ENCODE measurements at regions of chrX and their contacts with region 1.

Region 1: DNA sequence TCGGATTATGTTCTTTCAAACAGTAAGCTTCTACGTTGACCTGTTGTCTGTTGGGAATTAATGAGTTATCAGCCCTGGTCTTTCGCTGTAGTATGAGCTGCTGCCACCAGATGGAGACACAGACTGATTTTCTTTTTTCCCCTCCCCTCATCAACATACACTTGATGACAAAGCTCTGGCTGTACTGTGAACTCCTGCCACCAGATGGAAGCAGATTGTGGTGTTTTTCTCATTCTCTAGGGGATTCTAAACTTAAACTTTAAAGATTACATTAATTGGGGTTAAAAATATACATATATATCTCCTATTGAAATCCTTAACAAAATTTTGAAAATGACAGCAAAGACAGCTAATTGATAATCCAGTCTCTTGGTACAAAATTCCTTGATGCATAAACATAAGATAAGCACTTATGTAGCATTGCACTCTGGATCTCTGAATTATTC is 44.8 kb downstream of the SMS start:
- DNase-seq: peak; percentile 29 to 80 (median 56)
- ATAC-seq: peak; percentile 98
- H3K4me3 ChIP-seq: no peak overlapping the region
- H3K4me3 Mint-ChIP-seq: no peak overlapping the region
- H3K27ac ChIP-seq: no peak overlapping the region
- H3K27ac Mint-ChIP-seq: no peak overlapping the region
- H3K4me1 ChIP-seq: no peaks in the 10 kb centered on the region
- H3K4me1 Mint-ChIP-seq: peaks cover 6% of the 10 kb centered on the region
- H3K27me3 ChIP-seq: no peaks in the 10 kb centered on the region
- H3K27me3 Mint-ChIP-seq: no peaks in the 10 kb centered on the region
- CTCF ChIP-seq: peak; percentile 71

Region 2: DNA sequence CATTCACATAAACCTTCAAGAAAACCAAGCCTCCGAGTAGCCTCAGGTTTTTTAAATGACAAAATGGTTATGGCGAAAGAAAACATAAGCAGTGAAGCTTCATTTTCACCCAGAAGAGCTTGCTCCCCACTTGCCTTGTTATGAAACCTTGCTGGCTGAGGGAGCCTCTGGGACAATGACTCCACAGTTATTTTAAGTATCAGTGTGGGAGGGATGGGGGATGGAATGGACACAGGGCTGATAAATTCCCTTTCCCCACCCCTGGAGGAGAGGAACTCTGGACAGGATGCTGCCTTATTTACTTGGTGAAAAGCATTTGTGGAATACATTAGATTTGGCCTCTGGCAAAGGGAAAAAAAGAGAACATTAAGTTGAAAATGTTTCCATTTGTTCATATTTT is 831.9 kb before region 1 on chrX:
- CTCF ChIA-PET with region 1: no interaction called
- POLR2A ChIA-PET with region 1: no interaction called
- intact Hi-C with region 1: no loop called
- DNase-seq: no peak
- ATAC-seq: no peak
- H3K4me3 ChIP-seq: no peak overlapping the region
- H3K4me3 Mint-ChIP-seq: no peak overlapping the region
- H3K27ac ChIP-seq: no peak overlapping the region
- H3K27ac Mint-ChIP-seq: no peak overlapping the region
- H3K4me1 ChIP-seq: no peaks in the 10 kb centered on the region
- H3K4me1 Mint-ChIP-seq: no peaks in the 10 kb centered on the region
- H3K27me3 ChIP-seq: no peaks in the 10 kb centered on the region
- H3K27me3 Mint-ChIP-seq: no peaks in the 10 kb centered on the region
- CTCF ChIP-seq: no peak

Region 3: GRCh38 chrX:21839334-21840192 is 145.8 kb before region 1 on chrX and contains the start of gene MBTPS2:
- CTCF ChIA-PET with region 1: no interaction called
- POLR2A ChIA-PET with region 1: no interaction called
- intact Hi-C with region 1: loop called in 1 of 2 experiments (anchors 2 kb)
- DNase-seq: peak; percentile 61 to 89 (median 79)
- ATAC-seq: peak; percentile 93
- H3K4me3 ChIP-seq: peak within 1 kb of the TSS; percentile 78 to 80
- H3K4me3 Mint-ChIP-seq: peak within 1 kb of the TSS; percentile 89
- H3K27ac ChIP-seq: peak within 1 kb of the TSS; percentile 65 to 75
- H3K27ac Mint-ChIP-seq: peak within 1 kb of the TSS; percentile 94
- H3K4me1 ChIP-seq: no peaks in the 10 kb centered on the region
- H3K4me1 Mint-ChIP-seq: peaks cover 7% of the 10 kb centered on the region
- H3K27me3 ChIP-seq: no peaks in the 10 kb centered on the region
- H3K27me3 Mint-ChIP-seq: no peaks in the 10 kb centered on the region
- CTCF ChIP-seq: no peak
- total RNA-seq, gene MBTPS2: 2.5 to 2.8 TPM

Region 4: DNA sequence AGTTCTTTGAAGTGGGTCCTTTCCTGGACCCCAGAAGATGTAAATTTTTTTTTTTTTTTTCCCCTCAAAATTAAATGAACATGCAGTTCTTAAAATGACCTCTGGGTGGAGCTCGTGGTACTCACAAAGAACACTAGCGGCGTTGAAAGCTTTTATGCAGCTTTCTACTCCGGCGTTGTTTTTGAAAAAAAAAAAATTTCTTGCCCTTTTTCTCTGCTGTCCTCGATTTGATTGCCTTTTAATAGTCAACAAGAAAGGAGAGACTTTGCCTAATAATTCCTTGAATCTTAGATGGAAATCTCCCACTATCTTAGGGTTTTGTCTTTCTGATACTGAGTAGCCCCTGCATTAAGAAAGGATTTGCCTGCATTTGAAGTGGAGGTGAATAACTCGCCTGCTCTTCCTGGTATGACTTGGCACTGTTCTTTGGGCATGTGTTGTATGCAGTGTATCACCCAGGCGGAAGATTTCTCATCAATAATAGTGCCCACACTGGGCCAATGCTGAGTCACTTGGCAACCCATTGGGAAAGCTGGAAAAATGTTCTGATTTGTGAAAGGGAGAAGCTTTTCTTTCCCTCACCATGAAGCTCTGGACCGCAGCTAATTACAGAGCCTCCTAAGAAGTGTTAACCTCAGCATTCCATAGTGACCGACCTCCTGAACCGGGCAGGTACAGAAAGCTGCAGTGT is 150.8 kb after region 1 on chrX:
- CTCF ChIA-PET with region 1: interaction called, 14 read pairs
- POLR2A ChIA-PET with region 1: no interaction called
- intact Hi-C with region 1: no loop called
- DNase-seq: peak in 5 of 9 experiments; percentile 3 to 56 (median 25)
- ATAC-seq: no peak
- H3K4me3 ChIP-seq: no peak overlapping the region
- H3K4me3 Mint-ChIP-seq: peak overlapping the region; percentile 71
- H3K27ac ChIP-seq: no peak overlapping the region
- H3K27ac Mint-ChIP-seq: no peak overlapping the region
- H3K4me1 ChIP-seq: no peaks in the 10 kb centered on the region
- H3K4me1 Mint-ChIP-seq: peaks cover 9% of the 10 kb centered on the region
- H3K27me3 ChIP-seq: no peaks in the 10 kb centered on the region
- H3K27me3 Mint-ChIP-seq: no peaks in the 10 kb centered on the region
- CTCF ChIP-seq: peak; percentile 57

Region 5: GRCh38 chrX:22278374-22278773 is 293.0 kb after region 1 on chrX:
- CTCF ChIA-PET with region 1: no interaction called
- POLR2A ChIA-PET with region 1: no interaction called
- intact Hi-C with region 1: loop called in 1 of 2 experiments (anchors 10 kb)
- DNase-seq: no peak
- ATAC-seq: no peak
- H3K4me3 ChIP-seq: no peak overlapping the region
- H3K4me3 Mint-ChIP-seq: no peak overlapping the region
- H3K27ac ChIP-seq: no peak overlapping the region
- H3K27ac Mint-ChIP-seq: no peak overlapping the region
- H3K4me1 ChIP-seq: no peaks in the 10 kb centered on the region
- H3K4me1 Mint-ChIP-seq: no peaks in the 10 kb centered on the region
- H3K27me3 ChIP-seq: no peaks in the 10 kb centered on the region
- H3K27me3 Mint-ChIP-seq: peaks cover 2% of the 10 kb centered on the region
- CTCF ChIP-seq: no peak

Region 6: DNA sequence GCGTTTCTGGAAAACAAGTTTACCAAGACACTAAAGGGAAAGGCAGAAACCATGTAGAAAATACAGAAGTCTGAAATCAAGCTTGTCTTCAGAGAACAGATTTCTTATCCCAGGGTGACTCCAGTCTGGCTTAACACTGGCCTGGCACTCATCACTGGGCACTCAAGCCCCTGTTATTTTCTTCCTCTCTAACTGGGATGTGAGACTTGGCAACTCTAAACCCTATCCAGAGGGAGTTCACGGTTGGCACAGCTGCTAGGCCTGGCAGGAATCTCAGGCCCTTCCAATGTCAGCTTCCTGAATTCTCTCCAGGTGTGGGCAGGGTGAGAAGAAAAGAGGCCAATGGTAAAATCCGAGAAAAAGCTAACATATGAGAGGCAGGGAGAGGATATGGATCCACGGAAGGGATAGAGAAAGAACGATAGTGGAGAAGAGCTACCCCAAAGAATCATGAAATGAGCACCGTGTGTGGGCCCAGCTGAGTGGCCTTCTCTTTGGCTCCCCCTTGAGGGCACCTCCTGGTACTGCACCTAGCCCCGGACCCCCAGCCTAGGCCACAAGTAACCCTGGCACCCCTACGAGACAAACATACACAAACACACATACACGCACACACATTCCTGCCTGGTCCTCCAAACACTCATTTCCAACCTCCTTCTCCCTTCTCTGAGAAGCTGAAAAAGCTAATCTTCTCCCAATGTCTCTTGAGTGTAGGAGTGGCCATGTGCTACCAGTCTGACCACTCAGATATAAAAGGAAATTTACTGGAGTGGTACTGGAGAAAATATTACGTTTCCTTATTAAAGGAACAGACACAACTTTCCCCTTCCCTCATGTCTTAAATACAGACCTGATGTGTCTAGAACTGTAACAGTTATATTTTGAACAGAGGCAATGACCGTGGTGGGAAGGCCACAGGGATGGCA is 1332.7 kb after region 1 on chrX:
- CTCF ChIA-PET with region 1: no interaction called
- POLR2A ChIA-PET with region 1: no interaction called
- intact Hi-C with region 1: loop called (anchors 10 kb)
- DNase-seq: peak in 4 of 9 experiments; percentile 12 to 26 (median 14)
- ATAC-seq: peak; percentile 48
- H3K4me3 ChIP-seq: no peak overlapping the region
- H3K4me3 Mint-ChIP-seq: no peak overlapping the region
- H3K27ac ChIP-seq: no peak overlapping the region
- H3K27ac Mint-ChIP-seq: no peak overlapping the region
- H3K4me1 ChIP-seq: no peaks in the 10 kb centered on the region
- H3K4me1 Mint-ChIP-seq: no peaks in the 10 kb centered on the region
- H3K27me3 ChIP-seq: no peaks in the 10 kb centered on the region
- H3K27me3 Mint-ChIP-seq: no peaks in the 10 kb centered on the region
- CTCF ChIP-seq: peak; percentile 32